ENCODE measurements at regions of chr20 and their contacts with region 1.

Region 1: DNA sequence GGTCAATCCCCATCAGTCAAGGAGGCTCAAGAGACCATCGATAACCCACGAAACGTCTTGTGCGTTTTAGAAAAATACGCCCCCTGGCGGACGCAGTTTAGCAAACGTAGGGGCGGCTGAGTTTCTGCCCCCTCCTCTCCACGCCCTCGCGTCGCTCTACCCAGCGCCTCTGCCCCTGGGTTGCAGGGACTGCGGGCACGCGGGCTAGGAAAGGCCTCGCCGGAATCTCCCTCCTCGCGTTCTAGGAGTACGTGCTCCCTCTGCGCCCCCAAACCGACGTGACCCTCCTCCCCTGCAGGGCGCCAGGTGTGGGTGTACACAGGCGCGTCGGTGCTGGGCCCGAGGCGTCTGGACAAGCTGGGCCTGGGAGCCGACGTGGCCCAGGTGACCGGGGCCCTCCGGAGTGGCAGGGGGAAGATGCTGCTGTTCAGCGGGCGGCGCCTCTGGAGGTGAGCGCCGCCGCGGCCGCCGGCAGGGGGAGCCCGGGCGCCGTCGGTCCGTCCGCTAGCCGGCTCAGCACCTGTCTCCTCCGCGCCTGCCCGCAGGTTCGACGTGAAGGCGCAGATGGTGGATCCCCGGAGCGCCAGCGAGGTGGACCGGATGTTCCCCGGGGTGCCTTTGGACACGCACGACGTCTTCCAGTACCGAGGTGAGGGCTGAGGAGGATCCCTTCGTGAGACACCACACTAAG is 5.3 kb downstream of the MMP9 start:
- DNase-seq: peak; percentile 75
- H3K4me3 Mint-ChIP-seq: no peak overlapping the region
- H3K27ac Mint-ChIP-seq: no peak overlapping the region
- H3K4me1 Mint-ChIP-seq: peaks cover 54% of the 10 kb centered on the region
- H3K27me3 Mint-ChIP-seq: peaks cover 77% of the 10 kb centered on the region

Region 2: GRCh38 chr20:45877781-45878761 is 135.9 kb before region 1 on chr20:
- CTCF ChIA-PET with region 1: no interaction called
- DNase-seq: no peak
- H3K4me3 Mint-ChIP-seq: no peak overlapping the region
- H3K27ac Mint-ChIP-seq: no peak overlapping the region
- H3K4me1 Mint-ChIP-seq: peaks cover 21% of the 10 kb centered on the region
- H3K27me3 Mint-ChIP-seq: no peaks in the 10 kb centered on the region

Region 3: GRCh38 chr20:45998761-45999160 is 15.2 kb before region 1 on chr20:
- CTCF ChIA-PET with region 1: interaction called, 31 read pairs
- DNase-seq: peak; percentile 33
- H3K4me3 Mint-ChIP-seq: no peak overlapping the region
- H3K27ac Mint-ChIP-seq: no peak overlapping the region
- H3K4me1 Mint-ChIP-seq: peaks cover 66% of the 10 kb centered on the region
- H3K27me3 Mint-ChIP-seq: peaks cover 45% of the 10 kb centered on the region

Region 4: DNA sequence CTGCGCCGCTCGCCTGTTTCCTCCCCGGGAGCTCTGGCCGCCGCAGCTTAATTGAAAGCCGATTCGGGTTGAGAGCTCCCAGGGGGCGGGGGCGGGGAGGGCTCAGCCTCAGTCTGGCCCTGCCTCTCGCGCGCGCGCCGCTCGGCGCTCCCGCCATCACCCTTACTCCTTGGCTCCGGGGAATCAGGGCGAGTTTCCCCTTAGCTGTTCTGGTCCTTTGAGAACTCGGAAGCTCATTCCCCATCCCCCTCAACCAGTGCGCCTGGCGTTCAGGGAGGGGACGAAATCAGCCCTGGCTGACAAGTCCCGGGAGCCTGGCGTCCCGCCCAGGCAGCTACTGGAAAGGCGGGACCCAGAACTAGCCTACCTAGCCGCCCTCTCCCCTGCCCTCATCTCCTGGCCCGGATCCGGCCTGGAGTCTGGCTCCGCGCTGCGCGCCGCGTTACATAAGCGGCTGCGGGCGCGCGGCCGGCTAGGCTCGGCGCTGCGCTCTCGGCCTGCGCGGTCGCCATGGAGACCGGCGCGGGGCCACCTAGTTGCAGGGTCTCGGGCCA is 17.8 kb after region 1 on chr20:
- CTCF ChIA-PET with region 1: interaction called, 11 read pairs
- DNase-seq: no peak
- H3K4me3 Mint-ChIP-seq: no peak overlapping the region
- H3K27ac Mint-ChIP-seq: no peak overlapping the region
- H3K4me1 Mint-ChIP-seq: no peaks in the 10 kb centered on the region
- H3K27me3 Mint-ChIP-seq: peaks cover 95% of the 10 kb centered on the region

Region 5: GRCh38 chr20:46132705-46133120 is 118.7 kb after region 1 on chr20:
- CTCF ChIA-PET with region 1: no interaction called
- DNase-seq: peak; percentile 69
- H3K4me3 Mint-ChIP-seq: no peak overlapping the region
- H3K27ac Mint-ChIP-seq: no peak overlapping the region
- H3K4me1 Mint-ChIP-seq: no peaks in the 10 kb centered on the region
- H3K27me3 Mint-ChIP-seq: peaks cover 58% of the 10 kb centered on the region